ENCODE measurements at regions of chr2 and their contacts with region 1.

Region 1: GRCh38 chr2:45009303-45009927 is at the start of gene SIX2:
- DNase-seq: peak; percentile 95
- H3K4me3 ChIP-seq: peak within 1 kb of the TSS; percentile 36 to 38
- H3K27ac ChIP-seq: peak within 1 kb of the TSS; percentile 29 to 69
- H3K4me1 ChIP-seq: peaks cover 9% of the 10 kb centered on the region
- H3K27me3 ChIP-seq: peaks cover 10% of the 10 kb centered on the region
- CTCF ChIP-seq: peak in 1 of 4 experiments; percentile 8
- POLR2A ChIP-seq: peak; percentile 47
- total RNA-seq, gene SIX2: 1.8 to 5.1 TPM

Region 2: DNA sequence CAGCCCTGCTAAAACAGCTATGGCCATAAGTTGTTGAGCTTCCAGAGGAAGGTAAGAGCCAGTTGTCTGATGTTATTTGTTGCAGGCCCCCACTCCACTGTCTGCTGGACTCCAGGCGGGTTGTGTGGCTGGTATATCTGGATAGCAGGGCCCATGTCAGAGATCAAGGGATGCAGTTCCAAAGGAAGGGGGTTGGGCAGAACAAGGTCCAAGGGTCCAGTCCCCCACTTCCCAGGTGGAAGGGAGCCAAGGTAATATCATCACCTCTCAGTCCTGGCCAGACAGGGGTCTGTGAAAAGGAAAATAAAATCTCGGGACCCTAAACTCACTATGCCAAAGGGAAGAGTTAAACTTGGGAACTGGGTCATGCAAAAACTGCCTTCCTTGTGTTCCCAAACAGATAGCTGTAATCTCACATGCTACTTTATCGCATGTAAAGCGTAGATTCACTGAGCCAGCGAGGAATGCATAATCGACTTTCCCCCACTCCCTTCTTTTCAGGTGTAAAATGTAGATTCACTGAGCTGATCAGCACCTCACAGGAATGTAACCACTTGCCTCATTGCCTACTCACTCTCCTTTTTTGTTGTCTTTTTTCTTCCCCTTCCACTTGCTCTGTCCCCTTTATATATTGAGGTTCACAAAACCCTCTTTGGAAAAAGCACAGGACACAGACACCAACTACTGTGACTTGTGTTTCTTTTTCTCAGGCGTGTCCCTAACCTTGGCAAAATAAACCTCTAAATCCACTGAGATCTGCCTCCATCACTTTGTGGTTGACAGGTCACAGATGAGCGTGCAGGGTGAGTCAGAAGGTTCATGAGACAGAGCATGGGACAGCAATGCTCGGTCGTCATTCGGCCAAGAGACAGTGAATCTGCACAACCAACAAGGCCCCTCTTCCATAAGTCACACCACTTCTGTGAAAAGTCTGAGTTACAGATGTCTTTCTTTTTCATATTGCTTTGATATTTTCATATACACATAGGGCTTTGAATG is 255.1 kb after region 1 on chr2:
- intact Hi-C with region 1: loop called (anchors 10 kb)
- DNase-seq: no peak
- H3K4me3 ChIP-seq: no peak overlapping the region
- H3K27ac ChIP-seq: no peak overlapping the region
- H3K4me1 ChIP-seq: no peaks in the 10 kb centered on the region
- H3K27me3 ChIP-seq: no peaks in the 10 kb centered on the region
- CTCF ChIP-seq: no peak
- POLR2A ChIP-seq: no peak

Measured in prostate gland (tissue), 2 donors.